HCT116 (cell line): ENCODE measurements at regions of chr9 and their contacts with region 1.

Region 1: DNA sequence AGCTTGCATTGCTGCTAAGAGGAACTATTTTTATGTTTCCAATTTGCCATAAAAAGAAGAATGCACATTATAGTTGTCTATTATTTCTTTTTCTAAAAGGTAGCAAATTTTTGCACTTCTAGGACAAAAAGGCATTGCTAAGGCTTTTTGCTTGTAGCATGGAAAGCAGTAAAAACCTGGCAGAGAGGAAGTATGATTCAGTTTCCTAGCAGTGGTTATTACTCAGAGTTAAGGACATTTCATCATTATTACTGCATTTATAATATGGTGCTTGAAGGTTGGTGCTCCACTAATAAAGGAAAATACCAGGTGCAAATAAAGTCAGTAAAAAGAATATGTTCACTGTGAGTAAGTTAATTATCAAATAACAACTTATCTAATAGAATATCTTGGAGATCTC is 179.8 kb upstream of the PLPPR1 start:
- DNase-seq: no peak
- ATAC-seq: no peak
- H3K4me3 ChIP-seq: no peak overlapping the region
- H3K27ac ChIP-seq: no peak overlapping the region
- H3K4me1 ChIP-seq: no peaks in the 10 kb centered on the region
- H3K27me3 ChIP-seq: peaks cover 21% of the 10 kb centered on the region
- CTCF ChIP-seq: no peak
- POLR2A ChIP-seq: no peak
- RAD21 ChIP-seq: no peak

Region 2: GRCh38 chr9:100784755-100785154 is 64.0 kb before region 1 on chr9:
- CTCF ChIA-PET with region 1: no interaction called
- POLR2A ChIA-PET with region 1: no interaction called
- RAD21 ChIA-PET with region 1: no interaction called
- intact Hi-C with region 1: no loop called
- DNase-seq: no peak
- ATAC-seq: no peak
- H3K4me3 ChIP-seq: no peak overlapping the region
- H3K27ac ChIP-seq: no peak overlapping the region
- H3K4me1 ChIP-seq: no peaks in the 10 kb centered on the region
- H3K27me3 ChIP-seq: peaks cover 18% of the 10 kb centered on the region; the same call in 1 of the 2 replicates
- CTCF ChIP-seq: no peak
- POLR2A ChIP-seq: no peak
- RAD21 ChIP-seq: no peak

Region 3: DNA sequence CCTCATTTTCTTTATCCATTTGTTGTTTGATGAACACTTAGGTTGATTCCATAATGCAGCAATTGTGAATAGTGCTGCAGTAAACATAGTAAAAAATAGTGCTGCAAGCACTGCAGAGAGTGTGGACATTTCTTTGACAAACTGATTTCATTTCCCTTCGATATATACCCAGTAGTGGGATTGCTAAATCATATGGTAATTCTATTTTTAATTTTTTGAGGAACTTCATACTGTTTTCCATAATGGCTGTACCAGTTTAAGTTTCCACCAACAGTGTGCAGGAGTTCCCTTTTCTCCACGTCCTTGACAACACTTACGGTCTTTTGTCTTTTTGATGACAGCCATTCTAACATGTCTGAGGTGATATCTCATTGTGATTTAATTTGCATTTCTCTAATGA is 41.6 kb after region 1 on chr9:
- CTCF ChIA-PET with region 1: no interaction called
- POLR2A ChIA-PET with region 1: no interaction called
- RAD21 ChIA-PET with region 1: no interaction called
- intact Hi-C with region 1: loop called (anchors 5 kb)
- DNase-seq: no peak
- ATAC-seq: no peak
- H3K4me3 ChIP-seq: no peak overlapping the region
- H3K27ac ChIP-seq: no peak overlapping the region
- H3K4me1 ChIP-seq: no peaks in the 10 kb centered on the region
- H3K27me3 ChIP-seq: peaks cover 14% of the 10 kb centered on the region
- CTCF ChIP-seq: no peak
- POLR2A ChIP-seq: no peak
- RAD21 ChIP-seq: no peak

Region 4: GRCh38 chr9:101047848-101048402 is 199.2 kb after region 1 on chr9:
- CTCF ChIA-PET with region 1: no interaction called
- POLR2A ChIA-PET with region 1: no interaction called
- RAD21 ChIA-PET with region 1: no interaction called
- intact Hi-C with region 1: no loop called
- DNase-seq: no peak
- ATAC-seq: no peak
- H3K4me3 ChIP-seq: no peak overlapping the region
- H3K27ac ChIP-seq: no peak overlapping the region
- H3K4me1 ChIP-seq: no peaks in the 10 kb centered on the region
- H3K27me3 ChIP-seq: no peaks in the 10 kb centered on the region; the same call in 1 of the 2 replicates
- CTCF ChIP-seq: no peak
- POLR2A ChIP-seq: no peak
- RAD21 ChIP-seq: no peak